AG04449 (cell line): ENCODE measurements at regions of chr2 and their contacts with region 1.

Region 1: DNA sequence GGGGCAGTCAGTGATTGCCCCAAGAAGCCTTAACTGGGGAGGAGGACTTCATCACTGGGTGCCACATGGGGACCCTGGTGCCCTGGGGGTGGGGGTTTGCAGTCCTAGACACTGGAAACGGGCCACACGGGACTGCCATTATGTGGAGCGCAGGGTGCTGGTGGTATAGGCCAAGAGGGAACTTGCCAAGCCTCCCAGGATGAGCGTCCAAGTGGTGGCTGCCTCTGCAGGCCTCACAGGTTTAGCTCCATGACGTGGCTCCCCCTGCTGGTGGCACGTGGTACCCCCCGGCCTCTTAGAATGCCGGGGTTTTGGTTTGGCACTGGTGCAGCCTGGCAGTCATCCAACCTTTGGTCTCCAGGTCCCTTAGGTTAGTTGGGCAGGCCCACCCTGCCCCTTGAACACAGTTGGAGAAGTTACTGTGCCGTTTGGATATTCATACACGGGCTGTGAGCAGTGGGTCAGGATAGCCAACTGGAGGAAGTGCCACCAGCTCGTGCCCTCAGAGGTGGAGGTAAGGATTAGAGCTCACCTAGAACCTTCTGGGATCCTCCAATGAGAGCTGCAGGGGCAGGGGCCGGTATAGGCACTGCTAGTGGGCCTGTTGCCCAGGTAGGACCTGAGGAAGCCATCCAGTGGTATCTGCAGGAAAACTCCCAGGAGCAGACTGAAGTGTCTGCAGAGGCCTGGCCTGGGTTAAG is 5.6 kb downstream of the PTMA start:
- DNase-seq: no peak
- H3K4me3 ChIP-seq: no peak overlapping the region
- CTCF ChIP-seq: peak; percentile 98

Region 2: GRCh38 chr2:231612179-231613053 is 101.5 kb before region 1 on chr2:
- CTCF ChIA-PET with region 1: interaction called, 237 read pairs
- POLR2A ChIA-PET with region 1: interaction called, 28 read pairs
- DNase-seq: peak; percentile 71
- H3K4me3 ChIP-seq: no peak overlapping the region
- CTCF ChIP-seq: peak; percentile 87

Region 3: GRCh38 chr2:231642631-231643494 is 71.0 kb before region 1 on chr2:
- CTCF ChIA-PET with region 1: interaction called, 111 read pairs
- POLR2A ChIA-PET with region 1: no interaction called
- DNase-seq: peak; percentile 72
- H3K4me3 ChIP-seq: no peak overlapping the region; the same call in 1 of the 2 replicates
- CTCF ChIP-seq: no peak

Region 4: DNA sequence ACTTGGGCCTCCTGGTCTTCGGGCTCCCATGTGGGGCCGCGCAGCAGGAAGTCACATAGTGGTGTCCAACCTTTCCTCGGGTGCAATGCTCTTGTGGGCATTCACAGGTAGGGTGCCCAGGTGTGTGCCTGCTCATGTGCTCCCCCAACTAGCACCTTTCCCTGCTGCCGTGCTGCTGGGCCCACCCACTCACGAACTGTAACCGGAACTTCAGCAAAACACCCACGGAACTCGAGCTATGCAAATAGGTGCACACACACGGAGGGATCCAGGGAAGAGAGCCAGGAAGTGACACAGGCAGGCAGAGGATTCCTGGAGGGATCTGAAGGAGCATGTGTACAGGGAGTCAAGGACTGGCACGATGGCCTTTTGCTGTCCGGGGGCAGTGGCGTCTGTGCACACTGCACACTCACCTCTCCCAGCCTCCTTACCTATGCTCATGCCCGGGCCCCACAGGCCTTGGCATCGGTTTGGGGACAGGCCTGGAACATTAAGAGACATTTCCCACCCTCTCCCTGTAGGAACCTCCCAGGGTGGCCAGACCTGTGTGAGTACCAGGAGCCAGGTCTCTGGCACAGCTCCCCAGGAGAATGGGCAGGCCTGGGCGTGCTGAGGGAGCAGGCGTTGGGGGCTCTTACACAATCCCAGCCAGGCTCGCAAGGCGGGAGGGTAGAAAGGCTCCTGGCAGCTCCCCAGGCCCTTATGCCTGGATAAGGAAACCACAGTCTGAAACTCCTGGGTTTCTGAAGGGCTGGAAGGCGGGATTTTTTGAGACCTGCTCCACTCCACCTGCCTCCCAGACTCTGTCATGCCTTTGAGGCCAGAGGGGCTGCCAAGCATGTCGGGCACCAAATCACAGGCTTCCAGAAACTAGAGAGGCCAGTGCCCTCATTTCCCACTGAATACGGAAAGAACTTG is 12.2 kb before region 1 on chr2:
- CTCF ChIA-PET with region 1: interaction called, 743 read pairs
- POLR2A ChIA-PET with region 1: interaction called, 7 read pairs
- DNase-seq: no peak
- H3K4me3 ChIP-seq: no peak overlapping the region
- CTCF ChIP-seq: no peak

Region 5: DNA sequence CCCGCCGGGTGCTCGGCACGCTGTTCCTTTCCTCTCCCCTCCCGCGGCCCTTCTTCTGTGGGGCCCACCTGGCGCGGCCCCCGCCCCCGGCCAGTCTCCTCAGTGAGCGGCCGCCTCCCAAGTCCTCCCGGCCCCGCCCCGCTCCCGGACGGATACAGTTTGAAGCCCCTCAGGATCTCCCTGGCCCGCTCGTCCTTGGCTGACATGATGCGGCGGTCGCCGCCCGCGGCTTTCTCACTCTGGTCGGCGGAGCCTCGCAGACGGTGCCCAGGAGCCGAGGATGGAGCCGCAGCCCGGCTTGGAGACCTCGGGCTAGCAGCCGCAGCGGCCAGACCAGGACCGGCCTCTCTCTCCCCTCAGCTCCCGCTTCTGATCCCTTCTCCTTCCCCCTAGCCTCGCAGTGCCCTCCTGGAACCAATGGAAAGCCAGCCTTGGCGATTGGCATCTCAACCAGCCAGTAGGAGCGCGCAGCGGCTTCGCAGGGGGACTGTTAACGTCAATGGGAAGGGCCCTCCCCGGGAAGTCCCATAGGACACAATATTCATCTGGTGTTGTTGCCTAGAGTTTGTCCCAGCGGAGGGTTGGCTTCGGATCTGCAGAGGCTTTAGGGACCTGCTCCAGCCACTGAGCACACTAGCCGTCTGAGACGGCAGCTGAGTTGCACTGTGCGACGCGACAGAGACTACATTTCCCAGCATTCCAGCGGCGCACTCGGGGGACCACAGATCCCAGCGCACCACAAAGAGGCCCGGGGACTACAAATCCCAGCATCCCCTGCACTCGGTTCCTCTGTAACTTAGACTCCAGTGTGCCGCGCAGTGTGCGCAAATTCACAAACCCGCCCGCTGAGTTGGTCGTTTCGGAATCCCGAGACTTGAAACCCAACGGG is 67.3 kb after region 1 on chr2 and contains the start of gene PDE6D:
- CTCF ChIA-PET with region 1: interaction called, 19 read pairs
- POLR2A ChIA-PET with region 1: interaction called, 4 read pairs
- DNase-seq: peak; percentile 92
- H3K4me3 ChIP-seq: peak within 1 kb of the TSS; percentile 94
- CTCF ChIP-seq: no peak